ENCODE measurements at regions of chr17 and their contacts with region 1.

Region 1: DNA sequence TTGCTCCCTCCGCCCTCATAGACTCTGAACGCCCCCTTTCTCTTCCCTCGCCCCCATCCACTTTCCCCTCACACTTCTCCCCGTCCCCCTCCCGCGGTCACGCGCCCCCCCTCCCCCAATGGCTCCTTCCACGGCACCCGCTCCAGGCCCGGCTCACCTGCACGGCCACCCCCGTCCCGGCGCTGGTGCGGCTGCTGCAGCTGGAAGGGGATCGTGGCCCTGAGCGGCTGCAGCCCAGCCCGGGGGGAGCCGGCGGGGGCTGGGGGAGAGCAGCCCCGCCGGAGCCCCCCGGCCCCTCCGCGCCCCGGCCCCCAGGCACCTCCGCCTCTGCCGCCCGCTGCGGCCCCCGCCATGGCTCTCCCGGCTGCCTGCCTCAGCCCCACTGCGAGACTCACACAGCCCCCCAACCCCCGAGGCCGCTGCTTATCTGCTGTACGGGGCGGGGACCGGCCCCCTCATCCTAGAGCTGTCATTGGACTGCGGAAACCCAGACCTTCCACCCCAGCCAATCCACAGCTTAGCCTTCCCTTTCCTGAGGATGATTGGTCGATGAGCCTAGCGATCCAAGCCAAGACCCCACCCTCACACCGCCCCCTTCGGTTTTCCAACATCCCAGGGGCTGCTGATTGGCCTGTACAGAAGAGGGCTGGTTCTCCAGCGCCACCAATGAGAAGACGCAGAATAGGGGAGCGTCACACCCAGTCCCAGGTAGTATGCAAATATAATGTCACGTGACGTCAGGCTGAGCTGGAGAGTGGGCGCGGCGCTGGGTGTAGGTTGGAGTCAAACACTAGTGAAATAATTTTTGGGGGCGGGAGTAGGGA is at the start of gene FAM117A:
- DNase-seq: peak; percentile 90 to 99 (median 95)
- ATAC-seq: peak; percentile 84
- H3K4me3 ChIP-seq: peak within 1 kb of the TSS; percentile 67 to 68
- H3K4me3 Mint-ChIP-seq: peak within 1 kb of the TSS; percentile 93
- H3K27ac ChIP-seq: peak within 1 kb of the TSS; percentile 46 to 69
- H3K27ac Mint-ChIP-seq: peak within 1 kb of the TSS; percentile 91
- H3K4me1 ChIP-seq: peaks cover 43% of the 10 kb centered on the region
- H3K4me1 Mint-ChIP-seq: peaks cover 48% of the 10 kb centered on the region
- H3K27me3 ChIP-seq: no peaks in the 10 kb centered on the region
- H3K27me3 Mint-ChIP-seq: no peaks in the 10 kb centered on the region
- CTCF ChIP-seq: no peak
- total RNA-seq, gene FAM117A: 23.4 to 28.7 TPM

Region 2: GRCh38 chr17:48944519-48945260 is 819.3 kb before region 1 on chr17 and contains the start of gene SNF8:
- CTCF ChIA-PET with region 1: no interaction called
- POLR2A ChIA-PET with region 1: no interaction called
- intact Hi-C with region 1: loop called in 1 of 2 experiments (anchors 5 kb)
- DNase-seq: peak; percentile 83 to 96 (median 92)
- ATAC-seq: peak; percentile 93
- H3K4me3 ChIP-seq: peak within 1 kb of the TSS; percentile 94 to 98
- H3K4me3 Mint-ChIP-seq: peak within 1 kb of the TSS; percentile 97
- H3K27ac ChIP-seq: peak within 1 kb of the TSS; percentile 90 to 93
- H3K27ac Mint-ChIP-seq: peak within 1 kb of the TSS; percentile 97
- H3K4me1 ChIP-seq: peaks cover 25% of the 10 kb centered on the region
- H3K4me1 Mint-ChIP-seq: peaks cover 19% of the 10 kb centered on the region
- H3K27me3 ChIP-seq: no peaks in the 10 kb centered on the region
- H3K27me3 Mint-ChIP-seq: no peaks in the 10 kb centered on the region
- CTCF ChIP-seq: no peak
- total RNA-seq, gene SNF8: 61.7 to 64.3 TPM

Region 3: GRCh38 chr17:49715717-49716279 is 48.1 kb before region 1 on chr17:
- CTCF ChIA-PET with region 1: interaction called, 9 read pairs
- POLR2A ChIA-PET with region 1: interaction called, 59 read pairs
- intact Hi-C with region 1: no loop called
- DNase-seq: peak in 6 of 9 experiments; percentile 27 to 92 (median 58)
- ATAC-seq: peak; percentile 65
- H3K4me3 ChIP-seq: no peak overlapping the region
- H3K4me3 Mint-ChIP-seq: peak overlapping the region; percentile 20
- H3K27ac ChIP-seq: peak overlapping the region; percentile 67 to 91
- H3K27ac Mint-ChIP-seq: peak overlapping the region; percentile 92
- H3K4me1 ChIP-seq: peaks cover 31% of the 10 kb centered on the region
- H3K4me1 Mint-ChIP-seq: peaks cover 41% of the 10 kb centered on the region
- H3K27me3 ChIP-seq: no peaks in the 10 kb centered on the region
- H3K27me3 Mint-ChIP-seq: no peaks in the 10 kb centered on the region
- CTCF ChIP-seq: no peak

Region 4: DNA sequence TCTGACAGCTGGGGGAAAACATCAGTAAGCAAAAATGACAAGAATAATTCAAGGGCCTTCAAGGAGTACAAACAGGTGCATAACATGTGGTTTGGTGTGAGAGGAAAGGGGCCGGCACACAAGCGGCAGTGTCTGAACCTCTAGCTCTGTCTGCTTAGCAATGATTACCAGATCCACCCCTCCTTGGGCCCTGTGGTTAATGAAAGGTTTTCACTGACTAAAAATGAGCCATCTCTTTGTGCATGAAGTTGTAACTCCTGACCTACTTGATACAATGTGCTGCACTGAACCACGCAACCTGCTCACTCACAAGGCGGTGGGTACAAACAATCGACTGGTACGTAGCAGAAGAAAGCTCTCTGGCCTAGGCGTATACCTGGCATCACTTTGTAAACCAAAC is 15.2 kb before region 1 on chr17:
- CTCF ChIA-PET with region 1: interaction called, 21 read pairs
- POLR2A ChIA-PET with region 1: interaction called, 100 read pairs
- intact Hi-C with region 1: loop called (anchors 1 kb)
- DNase-seq: peak in 8 of 9 experiments; percentile 26 to 85 (median 64)
- ATAC-seq: peak; percentile 82
- H3K4me3 ChIP-seq: peak overlapping the region in 1 of 2 experiments; percentile 10
- H3K4me3 Mint-ChIP-seq: peak overlapping the region; percentile 79
- H3K27ac ChIP-seq: peak overlapping the region; percentile 60 to 88
- H3K27ac Mint-ChIP-seq: peak overlapping the region; percentile 99
- H3K4me1 ChIP-seq: peaks cover 84% of the 10 kb centered on the region
- H3K4me1 Mint-ChIP-seq: peaks cover 84% of the 10 kb centered on the region
- H3K27me3 ChIP-seq: no peaks in the 10 kb centered on the region
- H3K27me3 Mint-ChIP-seq: no peaks in the 10 kb centered on the region
- CTCF ChIP-seq: no peak

Region 5: DNA sequence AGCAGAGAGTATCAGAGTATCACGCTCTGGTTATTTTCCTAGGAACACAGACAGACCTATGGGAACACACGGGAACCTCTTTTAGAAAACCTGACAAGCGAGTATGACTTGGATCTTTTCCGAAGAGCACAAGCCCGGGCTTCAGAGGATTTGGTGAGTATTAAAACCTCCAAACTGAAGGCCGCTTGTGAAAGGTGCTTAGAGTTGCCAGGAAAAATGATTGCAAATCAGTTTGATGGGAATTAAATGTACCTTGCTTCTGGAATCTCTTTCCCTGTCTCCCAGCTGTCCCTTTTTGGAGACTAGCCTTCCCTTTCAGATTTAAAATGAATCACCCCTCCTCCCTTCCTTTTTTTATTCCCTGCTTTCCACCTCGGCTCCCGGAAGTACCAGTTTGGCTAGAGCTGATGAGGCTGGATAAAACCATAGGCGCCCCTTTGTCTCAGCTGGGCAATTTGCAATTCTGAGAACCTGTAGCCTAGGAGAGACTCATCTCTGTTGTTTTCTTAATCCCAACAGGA is 51.9 kb after region 1 on chr17:
- CTCF ChIA-PET with region 1: no interaction called
- POLR2A ChIA-PET with region 1: interaction called, 13 read pairs
- intact Hi-C with region 1: no loop called
- DNase-seq: no peak
- ATAC-seq: no peak
- H3K4me3 ChIP-seq: no peak overlapping the region
- H3K4me3 Mint-ChIP-seq: no peak overlapping the region
- H3K27ac ChIP-seq: peak overlapping the region in 1 of 2 experiments; percentile 6
- H3K27ac Mint-ChIP-seq: peak overlapping the region; percentile 32
- H3K4me1 ChIP-seq: peaks cover 66% of the 10 kb centered on the region
- H3K4me1 Mint-ChIP-seq: peaks cover 70% of the 10 kb centered on the region
- H3K27me3 ChIP-seq: no peaks in the 10 kb centered on the region
- H3K27me3 Mint-ChIP-seq: no peaks in the 10 kb centered on the region
- CTCF ChIP-seq: no peak

Region 6: DNA sequence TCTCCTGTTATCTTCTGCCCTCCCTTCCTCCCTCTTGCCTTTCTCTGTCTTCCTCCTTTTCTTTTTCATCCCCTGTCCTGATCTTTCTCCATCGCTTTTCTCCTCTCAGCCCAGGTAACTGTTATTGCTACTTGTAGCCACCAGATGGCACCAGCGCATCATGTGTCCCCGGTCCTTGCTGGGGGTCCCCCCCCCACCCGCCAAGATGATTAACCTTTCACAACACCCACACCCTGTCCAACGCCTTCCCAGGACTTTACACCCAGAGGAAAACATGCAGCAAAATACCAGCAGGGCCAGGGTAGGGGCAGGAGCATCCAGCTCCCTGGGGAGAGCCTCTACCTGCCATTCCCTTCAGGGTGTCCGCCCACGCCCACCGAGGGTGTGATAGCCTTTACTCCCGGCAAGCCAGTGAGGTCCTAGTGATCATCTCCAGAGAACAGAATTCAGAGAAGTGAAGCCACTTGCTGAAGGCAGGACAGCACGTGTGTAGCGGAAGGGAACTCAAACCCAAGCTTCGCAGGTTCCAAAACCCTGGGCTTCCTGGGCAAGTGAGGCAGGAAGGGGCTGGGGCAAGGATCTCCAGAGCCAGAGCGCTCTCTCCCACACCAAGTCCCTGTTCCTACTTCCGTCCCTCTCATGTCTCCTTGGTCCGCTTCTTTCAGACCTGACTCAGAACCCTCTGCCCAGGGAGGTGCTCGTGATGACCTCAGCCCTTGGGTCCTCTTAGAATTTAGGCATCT is 97.4 kb after region 1 on chr17:
- CTCF ChIA-PET with region 1: no interaction called
- POLR2A ChIA-PET with region 1: no interaction called
- intact Hi-C with region 1: no loop called
- DNase-seq: peak; percentile 14 to 81 (median 66)
- ATAC-seq: peak; percentile 90
- H3K4me3 ChIP-seq: no peak overlapping the region
- H3K4me3 Mint-ChIP-seq: no peak overlapping the region
- H3K27ac ChIP-seq: no peak overlapping the region
- H3K27ac Mint-ChIP-seq: no peak overlapping the region
- H3K4me1 ChIP-seq: no peaks in the 10 kb centered on the region
- H3K4me1 Mint-ChIP-seq: peaks cover 4% of the 10 kb centered on the region
- H3K27me3 ChIP-seq: peaks cover 0 to 3% of the 10 kb centered on the region in 2 experiments
- H3K27me3 Mint-ChIP-seq: peaks cover 11% of the 10 kb centered on the region
- CTCF ChIP-seq: peak; percentile 93